Gastrocnemius medialis (tissue), 4 donors: ENCODE measurements at regions of chr9 and their contacts with region 1.

Region 1: DNA sequence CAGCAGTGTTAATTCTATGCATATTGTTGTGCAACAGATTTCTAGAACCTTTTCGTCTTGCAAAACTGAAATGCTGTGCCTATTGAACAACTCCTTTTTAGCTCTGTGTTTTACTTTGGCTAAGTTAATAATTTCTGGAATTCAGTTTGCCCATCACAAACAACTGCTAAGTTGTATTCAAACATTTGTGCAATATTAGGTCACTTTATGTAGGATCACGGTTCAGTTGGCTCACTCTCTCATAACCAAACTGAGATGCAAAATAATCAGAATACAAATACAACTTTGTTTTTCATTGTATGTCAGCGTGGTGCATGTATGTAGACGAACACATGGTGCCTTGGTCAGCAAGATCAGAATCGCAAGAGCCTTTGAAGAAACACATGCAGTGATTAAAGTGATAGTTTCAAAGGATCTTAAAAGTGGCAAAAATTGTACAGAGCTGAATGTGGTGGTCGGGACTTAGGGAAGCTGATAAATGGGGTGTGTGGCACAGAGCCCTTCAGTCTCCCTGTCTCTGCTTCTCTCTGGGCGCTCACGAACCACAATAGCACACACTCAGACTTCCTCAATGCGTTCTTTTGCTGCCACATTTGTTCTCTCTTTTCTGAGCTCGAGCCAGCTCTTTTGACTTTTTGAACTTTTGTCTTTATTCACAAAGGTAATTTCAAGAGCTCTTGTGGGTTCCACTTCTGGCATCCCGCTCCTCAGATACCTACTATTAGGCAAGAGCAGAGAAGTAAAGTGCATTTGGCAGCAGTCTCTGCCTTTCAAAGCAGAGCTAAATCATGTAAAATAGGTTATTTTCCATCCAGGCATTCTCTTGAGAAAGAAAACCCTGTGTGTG is 112.4 kb upstream of the CTSL start:
- DNase-seq: no peak
- ATAC-seq: no peak
- H3K4me3 ChIP-seq: no peak overlapping the region
- H3K27ac ChIP-seq: no peak overlapping the region
- H3K4me1 ChIP-seq: no peaks in the 10 kb centered on the region
- H3K27me3 ChIP-seq: no peaks in the 10 kb centered on the region
- CTCF ChIP-seq: no peak
- POLR2A ChIP-seq: no peak

Region 2: GRCh38 chr9:87590996-87591395 is 22.5 kb before region 1 on chr9:
- in situ Hi-C with region 1: no loop called
- intact Hi-C with region 1: loop called (anchors 1 kb)
- DNase-seq: no peak
- ATAC-seq: no peak
- H3K4me3 ChIP-seq: no peak overlapping the region
- H3K27ac ChIP-seq: no peak overlapping the region
- H3K4me1 ChIP-seq: peaks cover 24 to 32% of the 10 kb centered on the region in 2 donors
- H3K27me3 ChIP-seq: no peaks in the 10 kb centered on the region
- CTCF ChIP-seq: no peak
- POLR2A ChIP-seq: no peak